ENCODE measurements at regions of chr3 and their contacts with region 1.

Region 1: GRCh38 chr3:8987645-8988383 is 24.5 kb upstream of the RAD18 start:
- DNase-seq: peak; percentile 61
- H3K4me3 Mint-ChIP-seq: no peak overlapping the region
- H3K27ac Mint-ChIP-seq: no peak overlapping the region
- H3K4me1 Mint-ChIP-seq: no peaks in the 10 kb centered on the region
- H3K27me3 Mint-ChIP-seq: no peaks in the 10 kb centered on the region
- CTCF ChIP-seq: peak; percentile 75

Region 2: GRCh38 chr3:8970971-8971589 is 16.7 kb before region 1 on chr3:
- CTCF ChIA-PET with region 1: interaction called, 31 read pairs
- POLR2A ChIA-PET with region 1: no interaction called
- intact Hi-C with region 1: no loop called
- DNase-seq: peak; percentile 75
- H3K4me3 Mint-ChIP-seq: no peak overlapping the region
- H3K27ac Mint-ChIP-seq: no peak overlapping the region
- H3K4me1 Mint-ChIP-seq: no peaks in the 10 kb centered on the region
- H3K27me3 Mint-ChIP-seq: peaks cover 10% of the 10 kb centered on the region
- CTCF ChIP-seq: peak; percentile 95

Region 3: DNA sequence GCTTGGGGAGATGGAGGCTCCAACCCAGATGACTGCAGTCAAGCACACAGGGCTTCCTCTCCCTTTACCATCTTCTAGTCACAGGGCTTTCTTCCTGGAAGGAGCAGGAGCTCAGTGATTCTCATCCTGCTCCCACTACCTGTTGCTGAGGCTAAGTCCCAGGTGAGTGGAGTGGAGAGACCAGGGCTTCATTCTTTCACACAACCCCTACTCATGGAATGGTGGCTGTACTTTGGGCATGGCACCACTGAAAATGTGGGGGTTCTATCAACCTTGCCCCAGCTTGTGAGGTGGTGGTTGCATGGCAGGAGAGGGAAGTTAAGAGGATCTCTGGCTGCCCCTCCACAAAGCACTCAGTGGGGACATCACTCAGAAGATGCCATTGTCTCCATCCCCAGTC is 12.2 kb after region 1 on chr3:
- CTCF ChIA-PET with region 1: interaction called, 21 read pairs
- POLR2A ChIA-PET with region 1: no interaction called
- intact Hi-C with region 1: no loop called
- DNase-seq: no peak
- H3K4me3 Mint-ChIP-seq: no peak overlapping the region
- H3K27ac Mint-ChIP-seq: no peak overlapping the region
- H3K4me1 Mint-ChIP-seq: no peaks in the 10 kb centered on the region
- H3K27me3 Mint-ChIP-seq: no peaks in the 10 kb centered on the region
- CTCF ChIP-seq: no peak

Region 4: DNA sequence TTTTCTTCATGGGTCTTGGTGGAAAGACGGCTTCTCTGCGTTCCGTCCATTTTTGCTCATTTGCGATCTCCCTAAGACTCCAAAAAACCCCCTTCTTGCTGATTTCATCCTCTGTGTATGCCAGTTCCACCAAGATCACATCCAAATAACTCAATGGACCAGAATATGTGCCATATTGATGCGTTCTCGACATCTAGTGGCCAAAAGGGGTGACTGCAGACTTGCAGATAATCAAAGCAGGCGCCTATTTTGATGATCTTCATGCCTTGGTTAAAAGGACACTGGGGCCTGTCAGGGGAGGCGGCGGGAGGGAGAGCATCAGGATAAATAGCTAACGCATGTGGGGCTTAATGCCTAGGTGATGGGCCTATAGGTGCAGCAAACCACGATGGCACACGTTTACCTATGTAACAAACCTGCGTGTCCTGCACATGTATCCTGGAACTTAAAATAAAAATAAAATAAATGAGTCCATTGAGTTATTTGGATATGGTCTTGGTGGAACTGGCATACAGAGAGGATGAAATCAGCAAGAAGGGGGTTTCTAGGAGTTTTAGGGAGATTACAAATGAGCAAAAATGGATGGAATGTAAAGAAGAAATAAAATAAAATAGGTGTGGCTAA is 79.7 kb after region 1 on chr3:
- CTCF ChIA-PET with region 1: interaction called, 4 read pairs
- POLR2A ChIA-PET with region 1: no interaction called
- intact Hi-C with region 1: loop called (anchors 1 kb)
- DNase-seq: peak; percentile 55
- H3K4me3 Mint-ChIP-seq: no peak overlapping the region
- H3K27ac Mint-ChIP-seq: no peak overlapping the region
- H3K4me1 Mint-ChIP-seq: no peaks in the 10 kb centered on the region
- H3K27me3 Mint-ChIP-seq: no peaks in the 10 kb centered on the region
- CTCF ChIP-seq: peak; percentile 89

Region 5: GRCh38 chr3:9638155-9638554 is 650.3 kb after region 1 on chr3:
- CTCF ChIA-PET with region 1: no interaction called
- POLR2A ChIA-PET with region 1: no interaction called
- intact Hi-C with region 1: no loop called
- DNase-seq: no peak
- H3K4me3 Mint-ChIP-seq: no peak overlapping the region
- H3K27ac Mint-ChIP-seq: no peak overlapping the region
- H3K4me1 Mint-ChIP-seq: peaks cover 2% of the 10 kb centered on the region
- H3K27me3 Mint-ChIP-seq: peaks cover 12% of the 10 kb centered on the region
- CTCF ChIP-seq: no peak